Vagina (tissue), 2 donors: ENCODE measurements at regions of chr9 and their contacts with region 1.

Region 1: DNA sequence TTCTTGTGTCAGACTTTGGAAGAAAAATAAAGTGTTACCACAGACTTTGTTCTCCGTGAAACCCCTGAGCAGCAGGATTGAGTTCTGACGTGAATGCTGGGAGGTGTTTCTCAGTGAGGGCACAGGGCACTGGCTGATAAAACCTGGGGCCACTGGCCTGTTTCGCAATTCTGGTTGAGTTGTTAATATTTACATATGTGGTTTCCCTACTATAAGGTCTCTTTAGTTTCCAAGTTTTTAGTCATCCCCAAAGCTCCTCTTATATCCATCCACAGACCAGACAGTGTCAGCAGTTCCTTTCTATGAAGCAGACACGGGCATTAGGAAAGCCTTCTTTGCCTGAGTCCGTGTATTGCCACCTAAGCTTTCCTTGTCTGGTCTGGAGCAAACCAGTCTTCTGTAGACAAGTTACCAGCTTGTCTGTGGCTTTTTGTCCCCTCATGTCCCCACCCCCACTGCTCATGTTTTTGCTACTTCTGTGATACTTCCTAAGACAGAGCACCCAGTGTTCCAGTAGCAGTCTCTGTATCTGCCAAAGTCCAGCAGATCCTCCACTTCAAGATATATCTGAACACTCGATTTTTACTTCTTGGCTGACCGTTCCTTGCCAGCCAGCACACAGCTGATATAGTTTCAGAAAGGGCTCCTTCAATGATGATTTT is 42.0 kb downstream of the ACO1 start:
- DNase-seq: no peak
- H3K4me3 ChIP-seq: no peak overlapping the region
- H3K27ac ChIP-seq: no peak overlapping the region
- H3K4me1 ChIP-seq: no peaks in the 10 kb centered on the region
- H3K27me3 ChIP-seq: no peaks in the 10 kb centered on the region
- CTCF ChIP-seq: no peak
- POLR2A ChIP-seq: no peak

Region 2: DNA sequence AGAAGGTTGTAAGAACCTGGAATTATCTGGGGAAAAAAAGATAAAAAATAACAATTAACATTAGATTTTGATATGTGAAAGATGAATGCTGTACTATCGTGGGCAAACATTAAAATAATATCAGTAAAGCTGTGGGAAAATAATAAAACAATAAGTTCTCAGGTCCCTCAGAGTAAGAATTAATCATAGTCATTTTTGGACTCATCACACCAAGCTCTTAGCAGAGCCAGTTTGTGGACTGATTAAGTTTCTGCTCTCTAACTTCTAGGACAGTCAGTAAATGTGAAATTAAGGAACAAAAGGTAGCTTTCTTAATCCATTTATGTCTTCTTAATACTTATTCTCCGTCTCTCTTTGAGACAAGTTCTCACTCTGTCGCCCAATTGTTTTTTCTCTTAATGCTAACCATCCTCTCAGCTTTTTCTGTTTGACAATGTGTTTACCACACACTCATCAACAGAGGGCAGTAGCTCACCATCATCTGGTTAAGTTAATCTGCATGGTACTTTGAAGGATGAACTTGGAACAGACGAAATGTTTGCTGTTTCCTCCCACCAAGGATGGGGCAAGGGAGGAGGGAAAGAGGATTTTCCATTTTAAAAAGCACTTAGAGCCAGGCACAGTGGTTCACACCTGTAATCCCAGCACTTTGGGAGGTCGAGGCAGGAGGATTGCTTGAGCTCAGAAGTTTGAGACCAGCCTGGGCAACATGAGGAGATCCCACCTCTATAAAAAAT is 47.2 kb before region 1 on chr9:
- intact Hi-C with region 1: loop called (anchors 5 kb)
- DNase-seq: no peak
- H3K4me3 ChIP-seq: no peak overlapping the region
- H3K27ac ChIP-seq: no peak overlapping the region
- H3K4me1 ChIP-seq: peaks cover 5% of the 10 kb centered on the region
- H3K27me3 ChIP-seq: no peaks in the 10 kb centered on the region
- CTCF ChIP-seq: peak; percentile 70 to 88 (median 82)
- POLR2A ChIP-seq: no peak

Region 3: GRCh38 chr9:32877639-32878217 is 451.3 kb after region 1 on chr9:
- intact Hi-C with region 1: no loop called
- DNase-seq: no peak
- H3K4me3 ChIP-seq: no peak overlapping the region
- H3K27ac ChIP-seq: no peak overlapping the region
- H3K4me1 ChIP-seq: no peaks in the 10 kb centered on the region
- H3K27me3 ChIP-seq: no peaks in the 10 kb centered on the region
- CTCF ChIP-seq: no peak
- POLR2A ChIP-seq: no peak